BJ (cell line): ENCODE measurements at regions of chr11 and their contacts with region 1.

Region 1: DNA sequence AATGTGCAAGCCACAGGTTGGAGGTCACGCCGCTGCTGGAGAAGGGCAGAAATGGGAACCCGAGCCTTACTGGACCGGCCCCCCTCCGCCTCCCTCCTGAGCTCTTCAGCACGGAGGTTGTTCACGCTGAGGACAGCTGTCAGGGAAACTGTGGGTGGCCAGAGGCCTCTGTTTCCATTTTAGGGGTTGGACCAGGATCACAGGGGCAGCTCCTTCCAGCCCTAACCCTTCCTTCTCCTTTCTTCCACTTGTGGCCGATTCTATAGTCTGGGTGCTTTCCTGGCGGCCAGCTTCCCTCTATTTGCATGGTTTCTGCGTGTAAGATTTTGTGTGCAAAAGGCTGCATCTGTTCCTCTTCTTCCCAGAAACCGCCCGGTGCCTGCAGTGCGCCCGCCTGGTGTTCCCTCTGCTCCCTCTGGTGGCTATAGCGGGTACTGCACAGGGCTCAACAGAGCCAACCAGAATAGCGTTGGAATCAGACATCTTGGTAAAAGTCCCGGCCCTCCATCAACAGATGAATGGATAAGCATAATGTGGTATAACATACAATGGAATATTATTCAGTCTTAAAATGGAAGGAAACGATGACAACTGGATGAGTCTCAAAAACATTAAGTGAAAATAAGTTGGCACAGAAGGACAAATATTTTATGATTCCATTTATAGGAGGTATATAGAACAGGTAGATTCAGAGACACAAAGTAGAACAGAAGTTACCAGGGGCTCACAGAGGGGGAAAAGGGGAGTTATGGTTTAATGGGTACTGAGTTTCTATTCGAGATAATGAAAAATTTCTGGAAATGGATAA is 8.4 kb upstream of the SLC22A8 start:
- DNase-seq: no peak
- H3K4me3 ChIP-seq: no peak overlapping the region
- H3K27me3 ChIP-seq: 0 out of 2 replicates have a peak, but pooled peaks cover 2% of the 10 kb centered on the region
- CTCF ChIP-seq: peak; percentile 100

Region 2: DNA sequence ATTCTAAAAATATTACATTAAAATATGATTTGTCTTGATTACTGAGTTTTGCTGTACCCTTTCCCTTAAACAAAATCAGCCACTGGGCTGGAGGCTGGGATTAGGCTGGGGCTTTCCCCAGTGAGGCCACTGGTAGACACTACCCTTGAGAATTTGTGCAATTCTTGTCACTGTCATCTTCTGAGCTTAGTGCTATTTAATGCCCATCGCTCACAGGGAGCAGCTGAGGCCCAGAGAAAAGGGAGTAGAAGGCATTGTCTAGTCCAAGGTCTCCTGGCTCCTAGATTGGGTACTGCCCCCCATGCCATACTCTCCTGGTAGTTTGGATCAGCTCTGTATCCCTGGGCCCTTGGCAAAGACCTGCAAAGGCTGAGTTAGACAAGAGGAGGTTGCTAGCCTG is 109.6 kb before region 1 on chr11:
- CTCF ChIA-PET with region 1: interaction called, 376 read pairs
- POLR2A ChIA-PET with region 1: no interaction called
- DNase-seq: no peak
- H3K4me3 ChIP-seq: no peak overlapping the region
- H3K27me3 ChIP-seq: peaks cover 6% of the 10 kb centered on the region
- CTCF ChIP-seq: no peak

Region 3: DNA sequence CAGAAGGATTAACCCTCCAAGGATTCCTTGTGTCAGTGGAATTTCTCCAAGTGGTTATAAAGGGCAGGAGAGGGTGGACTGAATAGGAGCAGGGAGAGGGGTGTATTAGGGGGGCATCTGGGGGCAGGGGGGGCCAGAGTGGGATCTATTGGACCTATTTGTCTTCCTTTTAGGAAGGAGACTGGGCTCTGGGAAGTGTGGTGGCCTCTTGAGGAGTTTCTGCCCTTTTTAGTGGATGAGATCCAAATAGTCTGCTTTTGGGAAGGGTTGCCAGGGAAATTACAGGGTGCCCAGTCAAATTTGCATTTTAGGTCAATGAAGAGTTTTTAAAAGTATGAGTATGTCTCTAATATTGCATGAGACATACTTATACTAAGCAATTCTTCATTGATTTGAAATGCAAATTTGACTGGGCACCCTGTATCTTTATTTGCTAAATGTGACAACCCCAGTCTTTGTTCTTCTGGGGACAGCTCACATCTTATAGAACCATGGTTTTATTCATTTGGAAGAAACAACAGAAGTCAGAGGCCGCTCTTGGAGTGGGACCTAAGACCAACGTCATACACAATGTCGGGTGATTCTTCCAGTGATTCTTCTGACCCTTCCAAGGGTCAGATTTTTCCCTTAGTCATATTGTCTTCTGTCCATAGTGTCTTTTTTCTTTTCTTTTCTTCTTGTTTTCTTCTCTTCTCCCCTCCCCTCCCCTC is 38.8 kb before region 1 on chr11:
- CTCF ChIA-PET with region 1: interaction called, 10 read pairs
- POLR2A ChIA-PET with region 1: no interaction called
- DNase-seq: no peak
- H3K4me3 ChIP-seq: no peak overlapping the region
- H3K27me3 ChIP-seq: no peaks in the 10 kb centered on the region; the same call in 1 of the 2 replicates
- CTCF ChIP-seq: no peak

Region 4: DNA sequence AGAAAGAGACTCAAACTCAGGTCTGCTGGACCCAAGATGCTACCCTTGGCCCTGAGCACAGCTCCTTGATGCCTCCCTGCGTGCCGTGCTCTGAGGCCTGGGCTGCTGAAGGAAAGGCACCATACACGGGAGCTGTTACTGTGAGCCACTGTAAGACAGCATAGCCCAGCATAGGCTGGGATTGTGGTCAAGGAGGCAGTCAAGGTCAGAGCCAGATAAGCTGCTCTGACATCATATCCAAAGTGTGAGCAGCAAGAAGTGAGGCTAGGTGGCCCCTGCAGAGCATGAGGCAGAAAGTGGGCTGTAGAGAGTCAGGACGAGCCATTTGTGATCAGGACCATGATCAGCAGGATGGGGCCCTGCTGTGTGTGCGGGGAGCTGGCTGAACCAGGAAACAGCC is 16.1 kb before region 1 on chr11:
- CTCF ChIA-PET with region 1: interaction called, 35 read pairs
- POLR2A ChIA-PET with region 1: no interaction called
- DNase-seq: no peak
- H3K4me3 ChIP-seq: no peak overlapping the region
- H3K27me3 ChIP-seq: peaks cover 4% of the 10 kb centered on the region; the same call in 1 of the 2 replicates
- CTCF ChIP-seq: no peak

Region 5: DNA sequence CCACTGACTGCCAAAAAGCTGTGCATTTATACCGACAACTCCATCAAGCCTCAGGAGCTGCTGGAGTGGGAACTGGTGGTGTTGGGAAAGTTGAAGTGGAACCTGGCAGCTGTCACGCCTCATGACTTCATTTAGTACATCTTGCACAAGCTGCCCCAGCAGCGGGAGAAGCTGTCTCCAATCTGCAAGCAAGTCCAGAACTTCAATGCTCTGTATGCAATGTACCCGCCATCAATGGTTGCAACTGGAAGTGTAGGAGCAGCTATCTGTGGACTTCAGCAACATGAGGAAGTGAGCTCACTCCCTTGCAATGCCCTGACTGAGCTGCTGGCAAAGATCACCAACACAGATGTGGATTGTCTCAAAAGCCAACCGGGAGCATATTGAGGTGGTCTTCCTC is 219.5 kb after region 1 on chr11 and contains the start of gene SLC22A25:
- CTCF ChIA-PET with region 1: no interaction called
- POLR2A ChIA-PET with region 1: no interaction called
- DNase-seq: no peak
- H3K4me3 ChIP-seq: no peak within 1 kb of the TSS
- H3K27me3 ChIP-seq: no peaks in the 10 kb centered on the region
- CTCF ChIP-seq: no peak
- polyA plus RNA-seq, gene SLC22A25: not detected in 2 replicates